ENCODE measurements at regions of chr1 and their contacts with region 1.

Region 1: GRCh38 chr1:8097077-8097799 is 71.1 kb upstream of the ERRFI1 start:
- DNase-seq: peak; percentile 98
- ATAC-seq: peak; percentile 85
- H3K4me3 ChIP-seq: peak overlapping the region in 1 of 2 experiments; percentile 17; a peak in 1 of 4 replicates
- H3K27ac ChIP-seq: peak overlapping the region; percentile 97
- H3K4me1 ChIP-seq: peaks cover 75 to 83% of the 10 kb centered on the region in 2 experiments
- H3K27me3 ChIP-seq: no peaks in the 10 kb centered on the region
- CTCF ChIP-seq: no peak
- POLR2A ChIP-seq: no peak
- RAD21 ChIP-seq: no peak

Region 2: DNA sequence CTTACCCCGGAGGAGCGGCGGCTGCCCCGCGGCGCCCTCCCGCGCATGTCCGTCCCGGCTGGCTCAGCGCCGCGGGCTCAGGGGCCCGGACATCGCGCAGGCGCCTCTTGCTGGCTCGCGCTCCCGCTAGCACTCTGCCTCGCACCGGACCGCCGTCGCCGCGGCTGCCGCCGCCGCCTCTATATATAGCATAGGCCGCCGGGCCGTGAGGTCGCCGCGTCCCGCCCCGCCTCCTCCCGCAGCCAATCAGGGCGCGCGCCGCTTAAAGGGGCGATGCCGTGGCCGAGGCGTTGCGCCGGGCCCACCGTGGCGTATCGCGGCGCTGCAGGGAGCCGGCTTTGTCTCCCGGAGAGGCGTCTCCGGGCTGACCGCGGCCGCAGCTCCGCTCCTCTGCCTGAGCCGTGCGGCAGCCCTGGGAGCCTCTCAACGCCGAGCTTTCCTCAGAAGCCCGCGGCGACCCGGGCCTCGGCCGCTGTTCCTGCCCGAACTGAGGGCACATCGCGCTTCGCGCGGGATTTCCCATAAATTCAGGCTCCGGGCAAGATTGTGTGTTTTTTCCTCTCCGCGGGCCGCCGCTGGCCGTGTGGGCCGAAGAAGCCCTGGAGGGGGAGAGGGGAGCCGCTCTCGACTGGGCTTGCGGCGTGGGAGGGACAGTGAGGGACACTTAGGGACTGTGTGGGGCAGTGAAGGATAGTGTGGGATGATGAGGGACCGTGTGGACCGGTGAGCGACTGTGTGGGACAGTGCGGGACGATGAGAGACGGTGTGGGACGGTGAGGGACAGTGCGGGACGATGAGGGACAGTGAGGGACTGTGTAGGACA is 70.9 kb before region 1 on chr1 and contains the start of gene ERRFI1:
- CTCF ChIA-PET with region 1: interaction called, 5 read pairs
- POLR2A ChIA-PET with region 1: interaction called, 7 read pairs
- RAD21 ChIA-PET with region 1: interaction called in 1 of 2 experiments, 3 read pairs
- intact Hi-C with region 1: loop called (anchors 1 kb)
- DNase-seq: peak; percentile 83
- ATAC-seq: peak; percentile 74
- H3K4me3 ChIP-seq: peak within 1 kb of the TSS; percentile 88 to 93
- H3K27ac ChIP-seq: peak within 1 kb of the TSS; percentile 99
- H3K4me1 ChIP-seq: peaks cover 64 to 87% of the 10 kb centered on the region in 2 experiments
- H3K27me3 ChIP-seq: no peaks in the 10 kb centered on the region
- CTCF ChIP-seq: no peak
- POLR2A ChIP-seq: peak; percentile 96
- RAD21 ChIP-seq: no peak
- total RNA-seq, gene ERRFI1: 777 TPM

Region 3: DNA sequence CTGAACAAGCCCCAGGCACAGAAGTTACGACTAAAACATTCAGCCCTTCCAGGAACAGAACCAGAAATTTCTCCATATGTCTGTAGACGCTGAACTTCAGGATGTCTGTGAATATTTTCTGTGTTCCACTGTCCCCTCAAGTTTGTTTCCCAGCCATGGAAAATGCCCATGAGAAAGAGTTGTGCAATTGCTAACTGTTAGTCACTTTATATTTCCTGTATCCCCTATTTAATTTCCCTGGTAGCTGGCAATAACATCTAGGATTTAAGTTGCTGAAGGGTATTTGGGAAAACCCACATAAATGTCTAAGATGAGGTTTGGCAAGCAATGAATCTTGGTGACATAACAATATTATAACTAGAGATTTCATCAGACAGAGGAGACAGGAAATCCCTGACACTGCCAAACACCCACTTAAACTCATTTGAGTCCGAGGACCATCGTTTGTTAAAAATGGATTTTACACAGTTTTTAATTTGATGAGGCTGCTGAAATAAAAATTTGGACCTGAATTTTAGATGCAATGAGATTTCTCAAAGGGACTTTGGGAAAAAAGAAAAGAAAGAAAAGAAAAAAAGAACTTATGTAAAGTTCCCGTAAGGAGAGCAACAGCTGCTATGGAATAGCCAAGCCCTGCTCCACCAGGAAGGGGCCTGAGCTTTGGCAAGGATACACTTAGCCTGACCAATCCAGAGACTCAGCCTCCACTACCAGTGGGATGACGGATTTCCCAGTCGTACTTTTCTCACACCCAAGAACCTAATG is 49.4 kb before region 1 on chr1:
- CTCF ChIA-PET with region 1: no interaction called
- POLR2A ChIA-PET with region 1: interaction called, 10 read pairs
- RAD21 ChIA-PET with region 1: no interaction called
- intact Hi-C with region 1: loop called (anchors 2 kb)
- DNase-seq: peak; percentile 81
- ATAC-seq: peak; percentile 56
- H3K4me3 ChIP-seq: peak overlapping the region in 1 of 2 experiments; percentile 5; a peak in 1 of 4 replicates
- H3K27ac ChIP-seq: peak overlapping the region; percentile 92
- H3K4me1 ChIP-seq: peaks cover 70 to 85% of the 10 kb centered on the region in 2 experiments
- H3K27me3 ChIP-seq: no peaks in the 10 kb centered on the region
- CTCF ChIP-seq: no peak
- POLR2A ChIP-seq: no peak
- RAD21 ChIP-seq: no peak; the same call in 1 of the 2 replicates

Region 4: DNA sequence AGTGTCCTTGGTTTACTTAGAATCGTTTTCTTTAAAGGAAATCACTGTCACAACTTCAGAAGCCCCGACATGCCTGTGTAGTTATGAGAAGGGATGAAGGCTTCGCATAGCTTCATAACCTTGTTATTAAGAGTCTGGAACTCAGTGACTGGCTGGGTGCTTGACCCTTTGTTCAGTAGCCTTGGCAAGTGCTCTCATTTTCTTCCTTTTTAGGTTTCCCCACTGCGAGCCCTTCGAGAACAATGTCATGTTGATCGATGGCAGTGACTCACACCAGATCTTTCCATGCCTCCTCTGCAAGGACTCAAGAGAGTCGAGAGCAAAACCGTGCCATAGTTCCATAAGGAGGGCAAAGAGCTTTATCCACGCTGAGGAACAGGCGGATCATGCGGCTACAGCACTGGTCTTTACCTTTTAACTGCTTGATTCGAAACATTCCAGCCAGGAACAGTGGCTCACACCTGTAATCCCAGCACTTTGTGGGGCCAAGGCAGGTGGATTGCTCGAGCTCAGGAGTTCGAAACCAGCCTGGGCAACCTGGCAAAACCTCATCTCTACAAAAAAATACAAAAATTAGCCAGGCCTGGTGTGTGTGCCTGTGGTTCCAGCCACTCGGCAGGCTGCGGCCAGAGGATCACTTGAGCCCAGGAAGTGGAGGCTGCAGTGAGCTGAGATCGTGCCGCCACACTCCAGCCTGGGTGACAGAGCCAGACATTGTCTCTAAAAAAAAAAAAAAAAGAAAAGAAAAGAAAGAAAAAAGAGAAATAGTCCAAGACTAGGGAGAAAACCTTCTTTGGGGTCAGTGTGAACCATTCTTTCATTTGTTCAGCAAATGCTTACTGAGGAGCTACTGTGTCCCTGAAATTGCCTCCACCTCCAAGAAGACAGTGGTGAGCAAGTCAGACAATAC is 24.3 kb after region 1 on chr1:
- CTCF ChIA-PET with region 1: no interaction called
- POLR2A ChIA-PET with region 1: interaction called, 21 read pairs
- RAD21 ChIA-PET with region 1: interaction called in 1 of 2 experiments, 4 read pairs
- intact Hi-C with region 1: no loop called
- DNase-seq: peak; percentile 95
- ATAC-seq: peak; percentile 65
- H3K4me3 ChIP-seq: peak overlapping the region in 1 of 2 experiments; percentile 15; a peak in 1 of 4 replicates
- H3K27ac ChIP-seq: peak overlapping the region; percentile 99
- H3K4me1 ChIP-seq: peaks cover 72 to 83% of the 10 kb centered on the region in 2 experiments
- H3K27me3 ChIP-seq: no peaks in the 10 kb centered on the region
- CTCF ChIP-seq: no peak
- POLR2A ChIP-seq: no peak
- RAD21 ChIP-seq: no peak

Region 5: GRCh38 chr1:8169364-8170058 is 72.3 kb after region 1 on chr1:
- CTCF ChIA-PET with region 1: interaction called, 4 read pairs
- POLR2A ChIA-PET with region 1: interaction called, 14 read pairs
- RAD21 ChIA-PET with region 1: interaction called in 1 of 2 experiments, 3 read pairs
- intact Hi-C with region 1: loop called (anchors 2 kb)
- DNase-seq: no peak
- ATAC-seq: peak; percentile 26; the same call in 1 of the 2 replicates
- H3K4me3 ChIP-seq: no peak overlapping the region
- H3K27ac ChIP-seq: peak overlapping the region; percentile 96
- H3K4me1 ChIP-seq: peaks cover 71 to 94% of the 10 kb centered on the region in 2 experiments
- H3K27me3 ChIP-seq: no peaks in the 10 kb centered on the region
- CTCF ChIP-seq: no peak
- POLR2A ChIP-seq: peak; percentile 26
- RAD21 ChIP-seq: no peak

Region 6: DNA sequence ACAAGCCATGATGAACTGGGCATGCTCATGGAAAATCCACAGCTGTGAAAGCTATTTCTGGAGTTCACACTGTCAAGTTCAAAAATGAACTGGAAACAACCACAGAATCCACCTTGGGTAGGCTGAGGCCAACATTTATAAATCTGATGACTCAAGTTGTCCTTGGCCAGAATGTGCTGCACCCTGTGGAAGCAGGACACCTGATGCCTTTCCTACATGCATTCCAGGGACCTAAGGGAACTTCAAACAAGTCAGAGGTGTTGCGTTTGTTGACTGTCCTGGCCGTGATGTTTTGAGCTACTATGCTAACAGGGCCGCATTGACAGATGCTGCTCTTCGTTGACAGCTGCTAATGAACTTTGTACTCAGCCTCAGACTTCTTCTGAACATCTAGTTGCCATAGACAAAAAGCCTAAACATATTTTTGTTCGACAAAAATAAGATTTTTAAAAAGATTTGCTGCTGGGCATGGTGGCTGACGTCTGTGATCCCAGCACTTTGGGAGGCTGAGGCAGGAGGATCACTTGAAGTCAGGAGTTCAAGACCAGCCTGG is 92.8 kb after region 1 on chr1:
- CTCF ChIA-PET with region 1: no interaction called
- POLR2A ChIA-PET with region 1: interaction called, 13 read pairs
- RAD21 ChIA-PET with region 1: no interaction called
- intact Hi-C with region 1: no loop called
- DNase-seq: peak; percentile 91
- ATAC-seq: peak; percentile 74
- H3K4me3 ChIP-seq: no peak overlapping the region
- H3K27ac ChIP-seq: peak overlapping the region; percentile 91
- H3K4me1 ChIP-seq: peaks cover 78 to 87% of the 10 kb centered on the region in 2 experiments
- H3K27me3 ChIP-seq: no peaks in the 10 kb centered on the region
- CTCF ChIP-seq: no peak
- POLR2A ChIP-seq: no peak
- RAD21 ChIP-seq: no peak

Region 7: GRCh38 chr1:8314346-8315280 is 217.4 kb after region 1 on chr1:
- CTCF ChIA-PET with region 1: interaction called, 7 read pairs
- POLR2A ChIA-PET with region 1: interaction called, 5 read pairs
- RAD21 ChIA-PET with region 1: no interaction called
- intact Hi-C with region 1: loop called (anchors 10 kb)
- DNase-seq: peak; percentile 48
- ATAC-seq: peak; percentile 75
- H3K4me3 ChIP-seq: no peak overlapping the region
- H3K27ac ChIP-seq: peak overlapping the region; percentile 50; the same call in 1 of the 2 replicates
- H3K4me1 ChIP-seq: peaks cover 29 to 60% of the 10 kb centered on the region in 2 experiments
- H3K27me3 ChIP-seq: no peaks in the 10 kb centered on the region
- CTCF ChIP-seq: peak in 2 of 3 experiments; percentile 92 to 94; a peak in 4 of 6 replicates
- POLR2A ChIP-seq: no peak
- RAD21 ChIP-seq: no peak